Natural killer cell (primary cell): ENCODE measurements at regions of chr10 and their contacts with region 1.

Region 1: GRCh38 chr10:96017191-96017687 is 26.1 kb upstream of the CCNJ start:
- DNase-seq: peak in 1 of 2 donors; percentile 76
- ATAC-seq: peak; percentile 81 to 87 (median 84)
- H3K4me3 ChIP-seq: no peak overlapping the region
- H3K4me3 Mint-ChIP-seq: no peak overlapping the region
- H3K27ac ChIP-seq: no peak overlapping the region
- H3K27ac Mint-ChIP-seq: no peak overlapping the region
- H3K4me1 ChIP-seq: no peaks in the 10 kb centered on the region
- H3K4me1 Mint-ChIP-seq: peaks cover 6% of the 10 kb centered on the region in 2 donors
- H3K27me3 ChIP-seq: no peaks in the 10 kb centered on the region
- H3K27me3 Mint-ChIP-seq: no peaks in the 10 kb centered on the region
- CTCF ChIP-seq: peak; percentile 73

Region 2: GRCh38 chr10:95998255-95998784 is 18.9 kb before region 1 on chr10:
- intact Hi-C with region 1: no loop called
- DNase-seq: no peak
- ATAC-seq: no peak
- H3K4me3 ChIP-seq: no peak overlapping the region
- H3K4me3 Mint-ChIP-seq: no peak overlapping the region
- H3K27ac ChIP-seq: no peak overlapping the region
- H3K27ac Mint-ChIP-seq: no peak overlapping the region
- H3K4me1 ChIP-seq: no peaks in the 10 kb centered on the region
- H3K4me1 Mint-ChIP-seq: no peaks in the 10 kb centered on the region
- H3K27me3 ChIP-seq: no peaks in the 10 kb centered on the region
- H3K27me3 Mint-ChIP-seq: no peaks in the 10 kb centered on the region
- CTCF ChIP-seq: no peak

Region 3: DNA sequence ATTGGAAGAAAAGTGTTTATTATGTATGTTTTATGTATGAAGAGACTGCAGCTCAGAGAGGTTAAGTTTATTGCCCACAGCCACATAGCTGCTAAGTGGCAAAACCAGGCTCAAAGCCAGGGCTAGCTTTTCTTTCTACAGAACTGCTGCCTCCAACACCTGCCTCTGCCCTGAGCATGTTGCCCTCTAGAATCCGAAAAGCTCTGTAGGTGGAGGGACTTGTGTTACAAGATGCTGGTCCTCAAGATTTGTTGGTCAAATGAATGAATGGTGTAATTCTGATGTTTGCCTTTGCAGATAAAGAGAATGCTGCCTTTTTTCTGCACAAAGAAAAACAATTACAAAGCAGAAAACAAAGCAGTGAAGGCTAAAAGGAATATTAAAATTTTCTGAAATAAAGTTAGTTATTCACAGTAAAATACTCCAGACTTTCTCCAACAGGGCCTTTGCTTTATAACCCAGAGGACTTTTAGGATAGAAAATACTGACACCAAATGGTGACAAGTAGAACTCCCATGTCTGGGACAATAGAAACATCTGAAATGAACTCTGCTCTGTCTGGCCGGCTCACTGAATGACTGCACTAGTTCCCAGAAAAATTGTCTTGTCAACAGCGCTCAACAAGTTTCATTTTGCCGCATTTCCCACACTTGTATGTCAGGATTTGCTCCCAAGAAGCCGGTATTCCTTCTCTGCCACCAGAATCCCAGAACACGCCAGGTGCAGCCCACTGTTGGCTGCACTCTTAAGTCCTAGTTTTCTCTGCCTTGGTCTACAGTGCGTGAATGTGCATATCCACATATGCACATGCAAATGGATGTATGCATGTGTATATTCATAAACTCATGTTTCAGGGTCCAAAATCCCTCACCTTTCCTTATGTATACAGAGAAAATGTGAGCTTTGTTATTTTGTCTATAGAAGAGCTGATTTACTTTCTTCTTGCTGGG is 276.0 kb after region 1 on chr10:
- intact Hi-C with region 1: loop called (anchors 5 kb)
- DNase-seq: peak in 1 of 2 donors; percentile 52
- ATAC-seq: no peak
- H3K4me3 ChIP-seq: no peak overlapping the region
- H3K4me3 Mint-ChIP-seq: no peak overlapping the region
- H3K27ac ChIP-seq: no peak overlapping the region
- H3K27ac Mint-ChIP-seq: no peak overlapping the region
- H3K4me1 ChIP-seq: no peaks in the 10 kb centered on the region
- H3K4me1 Mint-ChIP-seq: peaks cover 0 to 2% of the 10 kb centered on the region in 2 donors
- H3K27me3 ChIP-seq: no peaks in the 10 kb centered on the region
- H3K27me3 Mint-ChIP-seq: peaks cover 13 to 19% of the 10 kb centered on the region in 2 donors
- CTCF ChIP-seq: no peak

Region 4: GRCh38 chr10:96339957-96340904 is 323.0 kb after region 1 on chr10:
- intact Hi-C with region 1: loop called (anchors 2 kb)
- DNase-seq: peak; percentile 19 to 78
- ATAC-seq: peak in 2 of 3 donors; percentile 43 to 69
- H3K4me3 ChIP-seq: no peak overlapping the region
- H3K4me3 Mint-ChIP-seq: no peak overlapping the region
- H3K27ac ChIP-seq: no peak overlapping the region
- H3K27ac Mint-ChIP-seq: no peak overlapping the region
- H3K4me1 ChIP-seq: no peaks in the 10 kb centered on the region
- H3K4me1 Mint-ChIP-seq: no peaks in the 10 kb centered on the region
- H3K27me3 ChIP-seq: no peaks in the 10 kb centered on the region
- H3K27me3 Mint-ChIP-seq: peaks cover 5 to 24% of the 10 kb centered on the region in 2 donors
- CTCF ChIP-seq: peak; percentile 45